Right ventricle myocardium inferior (tissue), 1 donor: ENCODE measurements at regions of chr15 and their contacts with region 1.

Region 1: DNA sequence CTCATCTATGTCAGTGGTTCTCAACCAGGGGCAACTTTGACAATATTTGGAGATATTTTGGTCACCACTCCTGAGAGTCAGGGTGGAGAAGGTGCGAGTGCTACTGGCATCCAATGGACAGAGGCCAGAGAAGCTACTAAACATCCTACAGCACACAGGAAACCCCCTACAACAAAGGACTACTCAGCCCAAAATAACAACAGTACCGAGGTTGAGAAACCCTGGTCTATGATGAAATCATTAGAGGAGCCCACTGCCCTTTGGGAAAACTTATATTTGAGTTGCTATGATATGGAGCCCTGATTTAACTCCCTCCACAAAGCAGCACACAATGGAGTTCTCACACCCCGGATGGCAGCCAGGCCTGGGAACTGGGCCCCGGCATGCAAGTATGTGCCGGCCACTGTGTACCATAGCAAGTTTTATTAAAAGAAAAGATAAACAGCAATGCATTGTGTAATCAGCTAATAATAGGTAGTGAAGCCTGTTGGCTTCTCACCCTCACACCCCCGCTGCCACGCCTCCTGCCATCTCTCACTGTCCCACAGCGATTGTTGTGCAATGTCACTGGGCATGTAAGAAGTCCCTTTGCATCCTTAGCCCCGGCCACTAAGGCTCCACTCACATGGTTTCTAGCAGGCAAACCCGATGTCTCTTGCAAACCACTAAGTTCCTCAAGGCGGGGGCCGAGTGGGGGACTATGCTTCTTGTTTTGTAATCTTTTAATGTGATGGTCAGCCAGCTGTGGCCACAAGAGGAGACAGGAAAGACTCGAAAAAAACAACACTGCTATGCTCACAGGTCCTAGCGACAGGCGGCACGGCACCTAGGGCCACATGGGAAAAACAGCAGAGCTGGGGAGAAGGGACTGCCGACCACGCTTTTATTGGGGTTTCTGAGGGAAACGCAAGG is 109.9 kb downstream of the AQP9 start:
- DNase-seq: peak; percentile 85
- ATAC-seq: peak; percentile 92

Region 2: DNA sequence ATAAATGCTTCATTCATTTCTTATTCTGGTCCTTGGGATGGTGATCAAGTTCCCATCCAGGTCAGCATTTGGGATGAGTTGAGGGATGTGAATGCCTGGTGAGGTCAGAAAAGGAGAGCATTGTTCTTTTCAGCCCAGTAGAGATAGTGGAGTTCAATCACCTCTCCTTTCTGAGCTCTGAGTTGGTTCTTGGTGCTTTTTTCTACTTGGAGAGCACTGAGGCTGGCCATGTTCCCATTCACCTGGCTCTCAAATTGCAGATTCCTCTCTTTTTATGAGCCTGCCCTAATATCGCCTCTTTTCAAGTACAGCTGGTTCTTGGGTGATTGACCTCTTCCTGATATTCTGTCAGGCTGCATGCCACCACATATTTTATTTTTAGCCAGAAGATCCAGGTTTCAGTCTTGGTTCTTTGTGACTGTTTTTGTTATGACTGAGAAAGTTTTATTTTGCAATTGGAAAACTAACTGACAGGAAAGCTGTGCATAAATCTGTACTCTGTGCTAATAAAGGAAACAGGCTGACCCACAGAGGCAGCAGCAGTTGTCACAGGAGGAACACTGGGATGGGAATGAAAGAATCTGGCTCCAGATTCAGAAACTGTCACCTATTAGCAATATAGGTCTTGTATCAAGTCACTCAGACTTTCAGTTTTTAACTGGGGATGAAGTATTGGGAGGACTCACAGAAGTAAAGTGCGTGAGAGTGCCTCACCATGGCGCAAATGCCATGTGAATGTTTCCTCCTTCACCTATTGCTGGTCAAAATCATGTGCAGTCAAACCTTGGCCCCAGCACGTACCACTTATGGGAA is 99.3 kb before region 1 on chr15:
- intact Hi-C with region 1: no loop called
- DNase-seq: no peak
- ATAC-seq: no peak

Region 3: GRCh38 chr15:58260911-58261267 is 12.8 kb after region 1 on chr15:
- intact Hi-C with region 1: loop called (anchors 1 kb)
- DNase-seq: no peak
- ATAC-seq: peak; percentile 87